Activated CD4-positive, alpha-beta T cell treated with anti-CD3 and anti-CD28 coated beads for 36 hours (primary cell): ENCODE measurements at regions of chr9 and their contacts with region 1.

Region 1: GRCh38 chr9:121278535-121279261 is 10.7 kb downstream of the GSN start:
- DNase-seq: peak; percentile 76
- ATAC-seq: peak; percentile 96
- H3K4me3 Mint-ChIP-seq: no peak overlapping the region
- H3K27ac Mint-ChIP-seq: no peak overlapping the region
- H3K4me1 Mint-ChIP-seq: peaks cover 11% of the 10 kb centered on the region
- H3K27me3 Mint-ChIP-seq: peaks cover 3% of the 10 kb centered on the region

Region 2: GRCh38 chr9:121038804-121039203 is 239.9 kb before region 1 on chr9:
- CTCF ChIA-PET with region 1: no interaction called
- POLR2A ChIA-PET with region 1: no interaction called
- intact Hi-C with region 1: no loop called
- DNase-seq: no peak
- ATAC-seq: no peak
- H3K4me3 Mint-ChIP-seq: no peak overlapping the region
- H3K27ac Mint-ChIP-seq: no peak overlapping the region
- H3K4me1 Mint-ChIP-seq: no peaks in the 10 kb centered on the region
- H3K27me3 Mint-ChIP-seq: no peaks in the 10 kb centered on the region

Region 3: GRCh38 chr9:121213136-121213806 is 65.4 kb before region 1 on chr9:
- CTCF ChIA-PET with region 1: interaction called, 24 read pairs
- POLR2A ChIA-PET with region 1: no interaction called
- intact Hi-C with region 1: no loop called
- DNase-seq: peak; percentile 87
- ATAC-seq: peak; percentile 89
- H3K4me3 Mint-ChIP-seq: no peak overlapping the region
- H3K27ac Mint-ChIP-seq: no peak overlapping the region
- H3K4me1 Mint-ChIP-seq: peaks cover 7% of the 10 kb centered on the region
- H3K27me3 Mint-ChIP-seq: no peaks in the 10 kb centered on the region

Region 4: GRCh38 chr9:121253821-121254471 is 24.8 kb before region 1 on chr9:
- CTCF ChIA-PET with region 1: interaction called, 11 read pairs
- POLR2A ChIA-PET with region 1: no interaction called
- intact Hi-C with region 1: no loop called
- DNase-seq: no peak
- ATAC-seq: no peak
- H3K4me3 Mint-ChIP-seq: no peak overlapping the region
- H3K27ac Mint-ChIP-seq: no peak overlapping the region
- H3K4me1 Mint-ChIP-seq: no peaks in the 10 kb centered on the region
- H3K27me3 Mint-ChIP-seq: peaks cover 6% of the 10 kb centered on the region

Region 5: GRCh38 chr9:121267689-121268597 is 10.8 kb before region 1 on chr9 and contains the start of gene GSN:
- CTCF ChIA-PET with region 1: interaction called, 29 read pairs
- POLR2A ChIA-PET with region 1: no interaction called
- intact Hi-C with region 1: no loop called
- DNase-seq: peak; percentile 69
- ATAC-seq: peak; percentile 81
- H3K4me3 Mint-ChIP-seq: peak within 1 kb of the TSS; percentile 61
- H3K27ac Mint-ChIP-seq: no peak within 1 kb of the TSS
- H3K4me1 Mint-ChIP-seq: peaks cover 14% of the 10 kb centered on the region
- H3K27me3 Mint-ChIP-seq: peaks cover 15% of the 10 kb centered on the region
- total RNA-seq, gene GSN: 1.7 to 1.9 TPM

Region 6: DNA sequence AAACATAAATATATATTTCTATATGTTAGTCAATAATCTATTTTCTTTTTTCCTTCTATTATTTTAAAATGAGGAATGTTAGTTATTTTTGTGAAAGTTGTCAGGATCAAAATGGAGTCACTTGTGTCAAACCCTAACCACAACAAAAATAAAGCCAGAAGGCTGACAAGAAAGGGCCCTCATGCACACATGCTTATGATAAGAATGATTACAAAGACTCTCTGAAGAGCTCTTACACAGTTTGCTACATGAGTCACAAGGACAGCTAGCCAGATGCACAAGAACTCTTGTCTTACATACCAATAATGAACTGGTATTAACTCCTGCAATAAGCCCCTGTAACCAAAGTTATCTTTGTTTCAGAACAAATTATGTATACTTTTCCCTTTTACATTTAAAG is 156.3 kb after region 1 on chr9:
- CTCF ChIA-PET with region 1: no interaction called
- POLR2A ChIA-PET with region 1: no interaction called
- intact Hi-C with region 1: no loop called
- DNase-seq: no peak
- ATAC-seq: no peak
- H3K4me3 Mint-ChIP-seq: no peak overlapping the region
- H3K27ac Mint-ChIP-seq: no peak overlapping the region
- H3K4me1 Mint-ChIP-seq: no peaks in the 10 kb centered on the region
- H3K27me3 Mint-ChIP-seq: peaks cover 17% of the 10 kb centered on the region